ENCODE measurements at regions of chr2 and their contacts with region 1.

Region 1: DNA sequence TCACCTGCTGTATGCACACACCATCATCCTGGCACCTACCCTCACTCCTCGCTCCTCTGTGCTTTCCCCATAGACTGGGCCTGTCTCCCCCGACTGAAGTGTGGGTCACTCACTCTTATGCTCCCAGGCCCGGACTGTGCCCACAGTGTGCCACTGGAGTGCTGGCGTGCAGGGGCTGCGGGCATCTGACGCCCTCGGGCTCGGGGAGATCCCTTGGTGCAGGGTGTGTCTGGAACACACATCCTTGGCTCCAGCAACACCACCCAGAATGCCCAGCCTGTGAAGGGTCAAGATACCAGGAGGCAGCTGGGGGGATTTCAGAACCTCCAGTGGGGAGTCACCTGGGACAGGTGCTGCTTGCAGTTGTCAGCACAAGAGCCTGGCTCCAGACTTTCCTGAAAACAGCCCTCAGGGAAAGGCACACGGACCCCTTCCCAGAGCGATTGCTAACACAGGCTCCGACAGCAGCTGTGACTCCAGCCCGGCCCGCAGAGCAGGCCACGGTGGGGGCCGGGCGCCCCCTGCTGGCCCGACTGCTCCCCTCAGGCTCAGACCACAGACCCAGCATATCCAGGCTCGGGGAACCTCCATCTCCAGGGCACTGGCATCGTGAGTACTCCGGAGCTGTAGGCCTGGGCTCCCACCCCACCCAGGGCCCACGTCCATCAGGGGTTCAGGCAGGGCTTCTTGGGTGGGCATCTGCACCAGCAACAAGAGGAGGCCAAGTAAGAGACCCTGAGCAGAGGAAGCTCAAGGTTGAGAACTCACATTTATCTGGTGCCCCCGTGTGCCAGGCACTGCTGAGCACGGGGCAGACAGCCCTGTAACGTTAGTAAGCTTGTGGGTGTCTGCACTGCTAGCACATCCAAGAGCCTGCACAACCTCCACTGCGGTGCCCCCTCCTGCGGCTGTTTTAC is 8.6 kb downstream of the HS1BP3 start:
- DNase-seq: peak; percentile 62
- H3K4me3 ChIP-seq: no peak overlapping the region
- H3K27ac ChIP-seq: no peak overlapping the region
- H3K4me1 ChIP-seq: peaks cover 10% of the 10 kb centered on the region
- H3K27me3 ChIP-seq: no peaks in the 10 kb centered on the region
- CTCF ChIP-seq: peak; percentile 79 to 95

Region 2: GRCh38 chr2:20403774-20404312 is 238.5 kb before region 1 on chr2:
- CTCF ChIA-PET with region 1: no interaction called
- dilution Hi-C with region 1: loop called (anchors 10 kb)
- in situ Hi-C with region 1: no loop called
- intact Hi-C with region 1: no loop called
- DNase-seq: no peak
- H3K4me3 ChIP-seq: no peak overlapping the region
- H3K27ac ChIP-seq: no peak overlapping the region
- H3K4me1 ChIP-seq: peaks cover 10% of the 10 kb centered on the region
- H3K27me3 ChIP-seq: no peaks in the 10 kb centered on the region
- CTCF ChIP-seq: no peak

Region 3: GRCh38 chr2:20438334-20439192 is 203.8 kb before region 1 on chr2:
- CTCF ChIA-PET with region 1: interaction called, 3 read pairs
- dilution Hi-C with region 1: no loop called
- in situ Hi-C with region 1: loop called (anchors 5 kb)
- intact Hi-C with region 1: loop called (anchors 1 kb)
- DNase-seq: peak; percentile 84
- H3K4me3 ChIP-seq: no peak overlapping the region
- H3K27ac ChIP-seq: no peak overlapping the region
- H3K4me1 ChIP-seq: peaks cover 18% of the 10 kb centered on the region
- H3K27me3 ChIP-seq: no peaks in the 10 kb centered on the region
- CTCF ChIP-seq: no peak

Region 4: GRCh38 chr2:20617892-20618467 is 24.3 kb before region 1 on chr2:
- CTCF ChIA-PET with region 1: no interaction called
- dilution Hi-C with region 1: no loop called
- in situ Hi-C with region 1: no loop called
- intact Hi-C with region 1: no loop called
- DNase-seq: peak; percentile 76
- H3K4me3 ChIP-seq: no peak overlapping the region
- H3K27ac ChIP-seq: no peak overlapping the region
- H3K4me1 ChIP-seq: peaks cover 27% of the 10 kb centered on the region
- H3K27me3 ChIP-seq: no peaks in the 10 kb centered on the region
- CTCF ChIP-seq: peak; percentile 21 to 32

Measured in mammary epithelial cell (primary cell).